Left cardiac atrium (tissue), 4 donors: ENCODE measurements at regions of chr15 and their contacts with region 1.

Region 1: DNA sequence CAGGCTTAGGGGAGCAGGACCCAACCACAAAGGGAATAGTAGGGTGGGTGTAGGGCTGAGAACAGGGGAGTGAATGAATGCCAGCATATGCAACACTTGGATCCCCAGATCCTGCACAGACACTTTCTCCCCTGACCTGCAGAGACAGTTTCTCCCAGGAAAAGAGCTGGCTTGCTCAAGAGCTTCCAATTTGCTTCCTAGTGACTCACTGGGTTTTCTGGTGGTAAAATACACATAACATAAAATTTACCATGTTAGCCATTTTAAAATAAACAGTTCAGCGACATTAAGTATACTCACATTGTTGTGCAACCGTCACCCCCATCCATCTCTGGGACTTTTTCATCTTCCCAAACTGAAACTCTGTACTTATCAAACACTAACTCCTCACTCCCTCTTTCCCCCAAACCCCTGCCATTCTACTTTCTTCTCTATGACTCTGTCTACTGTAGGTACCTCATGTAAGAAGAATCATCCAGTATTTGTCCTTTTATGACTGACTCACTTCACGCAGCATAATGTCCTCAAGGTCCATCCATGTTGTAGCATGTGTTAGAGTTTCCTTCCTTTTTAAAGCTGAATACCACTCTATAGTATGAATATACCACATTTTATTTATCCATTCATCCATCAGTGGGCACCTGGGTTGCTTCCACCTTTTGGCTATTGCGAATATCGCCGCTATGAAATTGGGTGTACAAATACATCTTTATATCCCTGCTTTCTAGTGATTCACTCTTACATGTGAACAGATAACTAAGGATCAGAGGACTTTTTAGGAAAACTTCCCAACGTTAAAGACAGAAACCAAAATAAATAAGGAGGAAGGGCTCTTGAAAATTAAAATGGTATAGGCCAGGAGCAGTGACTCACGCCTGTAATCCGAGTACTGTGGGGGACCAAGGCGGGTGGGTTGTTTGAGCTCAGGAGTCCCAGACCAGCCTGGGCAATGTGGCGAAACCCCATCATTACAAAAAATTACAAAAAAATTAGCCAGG is 95.6 kb upstream of the TJP1 start:
- DNase-seq: no peak
- ATAC-seq: no peak

Region 2: DNA sequence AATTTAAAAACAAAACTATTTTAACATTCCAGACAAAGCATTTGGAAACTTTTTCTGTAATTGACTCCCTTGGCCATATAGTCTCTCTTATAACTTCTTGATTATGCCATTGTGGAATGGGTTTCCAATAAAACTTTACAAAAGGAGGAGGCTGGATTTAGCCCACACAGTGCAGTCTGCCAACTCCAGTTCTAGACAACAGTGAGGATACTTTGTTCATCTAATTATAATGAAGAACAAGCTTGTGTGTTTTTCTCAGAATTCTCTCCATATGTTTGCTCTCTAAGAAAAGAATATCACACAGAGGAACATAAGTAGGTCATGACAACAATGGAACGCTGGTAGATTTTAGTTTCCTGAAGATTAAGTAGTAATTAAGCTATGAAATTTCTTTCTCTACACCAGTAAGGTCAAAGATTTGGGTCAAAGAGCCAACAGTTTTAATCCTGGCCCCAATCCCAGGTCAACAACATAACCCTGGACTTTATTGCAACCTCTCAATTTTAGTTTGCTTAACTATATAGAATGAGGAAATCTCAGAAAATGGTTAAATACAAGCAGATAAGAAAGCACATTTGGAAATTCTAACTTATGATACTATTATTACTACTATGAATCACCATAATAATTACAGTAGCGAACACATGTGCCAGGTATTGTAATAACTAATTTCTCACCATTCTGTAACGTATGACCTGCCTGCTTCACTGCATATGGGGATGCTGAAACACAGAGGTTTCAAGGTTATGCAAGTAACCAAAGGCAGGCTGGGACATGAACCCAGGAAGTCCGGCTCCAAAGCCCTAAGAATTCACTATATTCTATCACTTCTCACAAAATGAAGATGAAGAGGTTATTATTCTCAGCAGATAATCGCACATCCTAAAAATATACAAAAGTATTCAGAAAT is 161.3 kb before region 1 on chr15:
- intact Hi-C with region 1: loop called in 1 of 2 experiments (anchors 5 kb)
- DNase-seq: no peak
- ATAC-seq: peak; percentile 12 to 61

Region 3: DNA sequence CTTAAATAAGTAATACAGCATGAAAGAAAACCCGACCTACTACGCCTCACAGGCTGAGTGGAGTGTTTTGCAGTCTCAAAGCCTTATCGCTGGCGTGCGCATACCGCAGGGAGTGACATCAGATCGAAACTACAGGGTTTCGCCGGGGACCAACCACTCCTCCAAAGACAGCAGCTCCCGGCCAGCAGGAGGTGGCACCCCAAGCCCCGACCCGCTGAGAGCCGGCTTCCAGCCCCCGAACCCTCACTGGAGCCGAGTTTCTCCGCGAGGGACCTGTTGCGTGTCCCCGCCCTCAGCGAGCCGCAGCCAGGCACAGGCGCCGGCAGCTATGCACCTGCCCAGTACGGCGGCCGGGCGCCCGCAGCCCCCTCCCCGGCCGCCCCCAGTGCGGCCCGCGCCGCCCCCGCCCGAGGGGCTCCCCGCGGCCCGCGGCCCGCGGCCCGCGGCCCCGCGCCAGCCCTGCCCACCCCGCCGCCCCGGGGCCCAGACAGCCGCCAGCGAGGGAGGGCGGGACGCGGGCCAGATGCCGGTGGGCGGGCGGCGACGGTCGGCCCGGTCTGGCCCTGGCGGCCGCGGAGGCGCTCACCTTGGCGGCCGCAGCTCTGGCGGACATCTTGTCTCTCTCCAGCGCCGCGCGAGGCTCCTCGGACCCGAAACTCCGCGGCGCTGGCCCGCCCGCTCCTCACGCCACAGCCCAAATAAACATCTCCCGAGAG is 96.3 kb before region 1 on chr15:
- intact Hi-C with region 1: loop called (anchors 5 to 10 kb)
- DNase-seq: peak; percentile 82
- ATAC-seq: peak; percentile 32 to 50

Region 4: GRCh38 chr15:29904757-29905417 is 13.0 kb before region 1 on chr15:
- intact Hi-C with region 1: no loop called
- DNase-seq: no peak
- ATAC-seq: no peak